ENCODE measurements at regions of chr5 and their contacts with region 1.

Region 1: GRCh38 chr5:75236322-75237316 is at the start of gene ANKRD31:
- DNase-seq: peak; percentile 84 to 94 (median 90)
- ATAC-seq: peak; percentile 97 to 100 (median 100)
- H3K4me3 ChIP-seq: peak within 1 kb of the TSS; percentile 50 to 75 (median 68)
- H3K27ac ChIP-seq: peak within 1 kb of the TSS in 10 of 12 donors; percentile 15 to 77 (median 58)
- H3K4me1 ChIP-seq: peaks cover 0 to 12% (median 5%) of the 10 kb centered on the region in 12 donors
- H3K27me3 ChIP-seq: no peaks in the 10 kb centered on the region
- CTCF ChIP-seq: peak; percentile 71 to 97 (median 90)
- POLR2A ChIP-seq: peak in 1 of 2 donors; percentile 58
- total RNA-seq, gene ANKRD31: 0.05 to 0.17 (median 0.11) TPM in 5 of 9 donors, not detected in the others

Region 2: DNA sequence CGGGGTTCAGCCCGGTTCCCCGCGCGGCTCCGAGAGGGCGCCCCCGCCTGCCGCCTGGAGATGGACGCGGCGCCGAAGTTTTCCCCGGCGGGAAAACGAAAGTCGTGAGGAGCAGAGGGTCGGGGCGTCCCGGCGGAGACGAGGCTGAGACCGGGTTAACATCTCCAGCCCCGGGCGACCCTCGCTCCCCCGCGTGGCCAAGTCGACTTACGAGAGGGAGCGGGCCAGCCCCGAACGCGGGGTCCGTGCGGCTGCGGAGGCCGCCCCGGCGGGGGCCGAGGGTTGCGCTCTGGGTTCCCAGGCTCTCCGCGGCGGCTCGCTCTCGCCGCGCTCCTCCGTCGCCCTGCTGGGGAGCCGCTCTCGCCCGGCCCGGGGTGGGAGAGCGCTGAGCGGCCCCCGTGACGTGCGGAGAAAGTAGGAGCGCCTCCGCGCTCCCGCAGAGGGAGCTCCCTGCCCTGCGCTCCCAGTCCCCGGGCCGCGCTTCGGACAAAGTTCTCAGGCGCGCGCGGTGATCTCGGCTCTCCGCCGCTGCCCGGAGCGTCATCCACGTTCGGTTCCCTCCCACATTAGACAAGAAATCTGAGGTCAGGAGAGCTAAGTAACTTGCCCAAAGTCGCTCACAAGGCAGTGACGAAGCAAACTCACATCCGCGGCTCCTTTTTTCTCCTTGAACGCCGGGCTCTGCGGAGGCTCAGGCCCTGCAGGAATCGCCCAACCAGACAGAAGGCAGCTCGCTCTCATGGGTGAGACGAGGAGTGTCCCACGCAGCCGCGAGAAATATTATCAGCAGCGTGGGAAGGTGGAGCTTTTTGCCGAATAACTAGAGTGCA is 183.1 kb before region 1 on chr5:
- intact Hi-C with region 1: loop called in 6 of 10 experiments (anchors 5 to 10 kb)
- DNase-seq: peak; percentile 40 to 75 (median 51)
- ATAC-seq: peak; percentile 29 to 78 (median 72)
- H3K4me3 ChIP-seq: peak overlapping the region; percentile 62 to 96 (median 86)
- H3K27ac ChIP-seq: peak overlapping the region; percentile 75 to 89 (median 84)
- H3K4me1 ChIP-seq: peaks cover 0 to 30% (median 14%) of the 10 kb centered on the region in 12 donors
- H3K27me3 ChIP-seq: peaks cover 0 to 21% (median 0%) of the 10 kb centered on the region in 9 donors
- CTCF ChIP-seq: peak in 3 of 12 donors; percentile 10 to 25 (median 19)
- POLR2A ChIP-seq: no peak

Region 3: GRCh38 chr5:75336625-75337339 is 100.2 kb after region 1 on chr5 and contains the start of gene HMGCR:
- intact Hi-C with region 1: loop called in 8 of 10 experiments (anchors 1 to 5 kb)
- DNase-seq: peak; percentile 99 to 100 (median 99)
- ATAC-seq: peak; percentile 99 to 100 (median 100)
- H3K4me3 ChIP-seq: peak within 1 kb of the TSS; percentile 75 to 99 (median 89)
- H3K27ac ChIP-seq: peak within 1 kb of the TSS; percentile 54 to 98 (median 88)
- H3K4me1 ChIP-seq: peaks cover 0 to 28% (median 14%) of the 10 kb centered on the region in 12 donors
- H3K27me3 ChIP-seq: no peaks in the 10 kb centered on the region
- CTCF ChIP-seq: peak in 5 of 12 donors; percentile 19 to 55 (median 35)
- POLR2A ChIP-seq: peak in 1 of 2 donors; percentile 69
- total RNA-seq, gene HMGCR: 6.0 to 15.2 (median 11.9) TPM

Region 4: GRCh38 chr5:75566710-75567309 is 330.2 kb after region 1 on chr5:
- intact Hi-C with region 1: loop called in 1 of 10 experiments (anchors 5 kb)
- DNase-seq: no peak
- ATAC-seq: peak; percentile 91 to 99 (median 96)
- H3K4me3 ChIP-seq: peak overlapping the region in 2 of 12 donors; percentile 6 to 8
- H3K27ac ChIP-seq: peak overlapping the region in 11 of 12 donors; percentile 33 to 75 (median 61)
- H3K4me1 ChIP-seq: peaks cover 0 to 51% (median 29%) of the 10 kb centered on the region in 12 donors
- H3K27me3 ChIP-seq: no peaks in the 10 kb centered on the region
- CTCF ChIP-seq: no peak
- POLR2A ChIP-seq: no peak

Region 5: GRCh38 chr5:76175051-76175666 is 938.5 kb after region 1 on chr5:
- intact Hi-C with region 1: loop called in 1 of 10 experiments (anchors 10 kb)
- DNase-seq: peak in 2 of 5 donors; percentile 13 to 25
- ATAC-seq: peak in 1 of 4 donors; percentile 49
- H3K4me3 ChIP-seq: no peak overlapping the region
- H3K27ac ChIP-seq: peak overlapping the region in 1 of 12 donors; percentile 9
- H3K4me1 ChIP-seq: peaks cover 0 to 9% (median 0%) of the 10 kb centered on the region in 12 donors
- H3K27me3 ChIP-seq: peaks cover 0 to 9% (median 0%) of the 10 kb centered on the region in 9 donors
- CTCF ChIP-seq: peak; percentile 33 to 69 (median 60)
- POLR2A ChIP-seq: no peak

Region 6: GRCh38 chr5:76256116-76256889 is 1019.7 kb after region 1 on chr5:
- intact Hi-C with region 1: loop called in 2 of 10 experiments (anchors 5 to 10 kb)
- DNase-seq: peak in 4 of 5 donors; percentile 48 to 57 (median 51)
- ATAC-seq: peak; percentile 78 to 95 (median 94)
- H3K4me3 ChIP-seq: no peak overlapping the region
- H3K27ac ChIP-seq: no peak overlapping the region
- H3K4me1 ChIP-seq: peaks cover 0 to 7% (median 3%) of the 10 kb centered on the region in 12 donors
- H3K27me3 ChIP-seq: peaks cover 0 to 19% (median 3%) of the 10 kb centered on the region in 9 donors
- CTCF ChIP-seq: peak; percentile 44 to 70 (median 60)
- POLR2A ChIP-seq: no peak

Region 7: DNA sequence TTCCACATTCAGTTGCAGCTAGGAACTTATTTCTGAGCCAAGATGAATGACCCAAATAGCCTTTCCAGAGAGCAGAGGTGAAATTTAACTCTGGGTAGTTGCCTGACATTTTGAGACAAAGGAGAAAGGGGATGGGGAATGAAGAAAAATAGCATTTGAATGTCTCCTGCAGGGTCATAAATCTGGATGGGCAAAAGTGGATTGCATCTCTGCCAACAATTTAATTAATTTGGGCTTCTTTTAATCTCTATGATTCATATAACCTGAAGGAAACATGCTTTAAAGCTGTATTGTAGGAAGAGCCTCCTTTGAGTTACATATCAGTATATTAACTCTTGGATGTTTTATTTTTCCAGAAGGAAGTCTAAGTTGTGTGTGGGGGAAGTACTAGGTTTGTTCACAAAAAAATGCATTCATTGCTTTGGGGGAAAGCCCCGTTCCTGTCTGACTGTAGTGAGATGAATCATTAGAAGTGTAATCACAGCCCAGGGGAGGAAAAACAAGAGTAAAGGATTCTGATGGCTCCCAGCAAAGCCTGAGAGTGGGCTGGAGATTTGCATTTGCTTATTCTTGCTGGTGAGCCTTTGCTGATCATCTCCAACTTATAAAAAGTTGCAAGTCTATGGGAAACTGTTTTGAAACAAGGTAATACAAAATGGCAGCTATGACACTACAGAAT is 1033.5 kb after region 1 on chr5:
- intact Hi-C with region 1: loop called in 1 of 10 experiments (anchors 10 kb)
- DNase-seq: no peak
- ATAC-seq: no peak
- H3K4me3 ChIP-seq: no peak overlapping the region
- H3K27ac ChIP-seq: no peak overlapping the region
- H3K4me1 ChIP-seq: peaks cover 0 to 21% (median 7%) of the 10 kb centered on the region in 12 donors
- H3K27me3 ChIP-seq: peaks cover 0 to 21% (median 0%) of the 10 kb centered on the region in 9 donors
- CTCF ChIP-seq: no peak
- POLR2A ChIP-seq: no peak